Heart right ventricle (tissue), 16 donors: ENCODE measurements at regions of chr12 and their contacts with region 1.

Region 1: GRCh38 chr12:19186722-19187661 is 57.5 kb downstream of the PLEKHA5 start:
- DNase-seq: no peak
- ATAC-seq: peak in 6 of 8 donors; percentile 19 to 64 (median 44)
- H3K4me3 ChIP-seq: no peak overlapping the region
- H3K27ac ChIP-seq: peak overlapping the region in 9 of 10 donors; percentile 17 to 81 (median 41)
- H3K4me1 ChIP-seq: peaks cover 6 to 88% (median 57%) of the 10 kb centered on the region in 9 donors
- H3K27me3 ChIP-seq: no peaks in the 10 kb centered on the region
- CTCF ChIP-seq: peak; percentile 56 to 80 (median 72)

Region 2: GRCh38 chr12:18430425-18431048 is 756.5 kb before region 1 on chr12:
- intact Hi-C with region 1: loop called in 6 of 10 experiments (anchors 2 to 10 kb)
- DNase-seq: peak in 1 of 2 donors; percentile 37
- ATAC-seq: peak; percentile 73 to 94 (median 88)
- H3K4me3 ChIP-seq: no peak overlapping the region
- H3K27ac ChIP-seq: no peak overlapping the region
- H3K4me1 ChIP-seq: peaks cover 0 to 25% (median 0%) of the 10 kb centered on the region in 9 donors
- H3K27me3 ChIP-seq: no peaks in the 10 kb centered on the region
- CTCF ChIP-seq: peak; percentile 42 to 89 (median 80)

Region 3: GRCh38 chr12:18849761-18850160 is 337.2 kb before region 1 on chr12:
- intact Hi-C with region 1: loop called in 1 of 10 experiments (anchors 10 kb)
- DNase-seq: no peak
- ATAC-seq: no peak
- H3K4me3 ChIP-seq: no peak overlapping the region
- H3K27ac ChIP-seq: no peak overlapping the region
- H3K4me1 ChIP-seq: no peaks in the 10 kb centered on the region
- H3K27me3 ChIP-seq: no peaks in the 10 kb centered on the region
- CTCF ChIP-seq: no peak

Region 4: DNA sequence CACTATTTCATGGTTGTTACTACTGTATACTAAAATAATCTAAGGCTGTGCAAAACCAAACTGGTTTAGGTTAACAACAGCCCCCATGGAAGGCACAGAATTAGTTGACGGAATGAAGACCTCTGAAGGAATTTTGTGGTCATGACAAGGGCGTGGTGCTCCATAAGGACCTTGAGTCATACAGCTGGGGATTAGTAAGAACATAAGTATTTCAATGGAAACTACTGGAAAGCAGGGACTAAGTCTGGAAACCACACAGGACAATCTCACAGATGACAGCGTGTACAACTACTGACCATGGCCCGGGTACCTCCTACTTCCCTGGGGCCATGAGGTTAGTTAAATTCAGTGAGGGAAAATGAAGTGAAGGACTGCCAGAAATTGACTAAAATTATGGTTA is 156.0 kb before region 1 on chr12:
- intact Hi-C with region 1: loop called in 3 of 10 experiments (anchors 5 to 10 kb)
- DNase-seq: no peak
- ATAC-seq: peak in 5 of 8 donors; percentile 30 to 59 (median 50)
- H3K4me3 ChIP-seq: no peak overlapping the region
- H3K27ac ChIP-seq: no peak overlapping the region
- H3K4me1 ChIP-seq: peaks cover 0 to 14% (median 4%) of the 10 kb centered on the region in 9 donors
- H3K27me3 ChIP-seq: no peaks in the 10 kb centered on the region
- CTCF ChIP-seq: no peak

Region 5: DNA sequence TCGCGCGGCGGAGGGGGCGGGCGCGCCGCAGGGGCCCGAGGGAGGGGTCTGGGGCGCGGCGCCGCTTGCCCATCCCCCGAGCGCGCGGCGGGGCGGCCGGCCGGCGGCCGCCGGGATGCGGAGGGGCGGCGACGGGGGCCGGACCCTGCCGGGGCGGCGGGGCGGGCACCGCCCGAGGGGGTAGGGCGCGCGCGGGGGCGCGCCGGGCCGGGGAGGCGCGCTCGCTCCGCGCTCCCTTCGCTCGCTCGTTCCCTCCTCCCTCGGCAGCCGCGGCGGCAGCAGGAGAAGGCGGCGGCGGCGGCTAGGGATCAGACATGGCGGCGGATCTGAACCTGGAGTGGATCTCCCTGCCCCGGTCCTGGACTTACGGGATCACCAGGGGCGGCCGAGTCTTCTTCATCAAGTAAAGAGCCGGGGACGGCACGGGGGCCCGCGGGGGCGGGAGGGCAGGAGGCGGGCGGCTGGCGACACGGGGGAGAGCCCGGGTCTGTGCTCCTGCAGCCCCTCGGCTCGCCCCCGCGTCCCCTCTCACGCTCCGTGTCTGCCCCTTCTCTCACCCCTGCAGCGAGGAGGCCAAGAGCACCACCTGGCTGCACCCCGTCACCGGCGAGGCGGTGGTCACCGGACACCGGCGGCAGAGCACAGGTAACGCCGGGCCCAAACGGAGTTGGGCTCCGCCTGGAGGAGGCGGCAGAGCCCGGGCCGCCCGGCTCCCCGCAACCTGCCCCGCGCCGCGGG is 57.3 kb before region 1 on chr12 and contains the start of gene PLEKHA5:
- intact Hi-C with region 1: loop called in 4 of 10 experiments (anchors 2 to 5 kb)
- DNase-seq: peak; percentile 68 to 82
- ATAC-seq: peak; percentile 73 to 94 (median 90)
- H3K4me3 ChIP-seq: peak within 1 kb of the TSS; percentile 82 to 98 (median 93)
- H3K27ac ChIP-seq: peak within 1 kb of the TSS; percentile 86 to 97 (median 94)
- H3K4me1 ChIP-seq: peaks cover 0 to 21% (median 6%) of the 10 kb centered on the region in 9 donors
- H3K27me3 ChIP-seq: no peaks in the 10 kb centered on the region
- CTCF ChIP-seq: peak in 6 of 9 donors; percentile 13 to 52 (median 32)
- total RNA-seq, gene PLEKHA5: 38.8 to 77.1 (median 65.7) TPM

Region 6: DNA sequence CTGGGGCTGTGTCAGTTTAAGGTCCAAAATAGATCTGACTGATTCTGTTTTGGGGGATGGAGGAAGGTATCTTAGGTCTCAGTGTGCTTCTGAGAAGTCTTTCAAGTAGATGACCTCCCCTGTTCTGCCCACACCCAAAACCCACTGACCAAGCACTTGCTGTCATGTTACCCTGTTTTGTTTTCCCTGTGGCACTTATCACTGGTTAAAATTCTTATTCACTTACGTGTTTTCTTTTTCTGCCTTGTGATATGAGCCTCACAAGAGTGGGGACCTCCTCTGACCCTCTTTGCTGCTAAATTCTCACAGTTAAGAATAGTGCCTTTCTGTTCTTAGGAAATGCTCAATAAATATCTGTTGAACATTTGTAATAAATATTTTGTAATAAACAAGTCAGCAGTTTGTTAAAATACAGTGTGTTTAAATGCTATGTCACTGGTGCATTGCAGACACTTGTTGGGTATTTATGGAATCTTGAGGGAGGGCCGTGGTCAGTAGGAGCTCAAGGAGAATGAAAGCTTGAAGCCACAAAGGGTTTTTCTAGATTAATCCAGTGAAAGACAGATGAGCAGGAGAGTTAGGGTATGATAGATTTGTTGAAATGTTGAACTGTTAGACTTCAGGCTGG is 36.6 kb before region 1 on chr12:
- intact Hi-C with region 1: no loop called
- DNase-seq: peak in 1 of 2 donors; percentile 29
- ATAC-seq: peak; percentile 67 to 95 (median 90)
- H3K4me3 ChIP-seq: no peak overlapping the region
- H3K27ac ChIP-seq: peak overlapping the region; percentile 36 to 87 (median 76)
- H3K4me1 ChIP-seq: peaks cover 0 to 55% (median 22%) of the 10 kb centered on the region in 9 donors
- H3K27me3 ChIP-seq: no peaks in the 10 kb centered on the region
- CTCF ChIP-seq: no peak

Region 7: GRCh38 chr12:19288603-19289244 is 101.7 kb after region 1 on chr12:
- intact Hi-C with region 1: loop called in 5 of 10 experiments (anchors 5 to 10 kb)
- DNase-seq: no peak
- ATAC-seq: peak in 4 of 8 donors; percentile 34 to 54 (median 45)
- H3K4me3 ChIP-seq: no peak overlapping the region
- H3K27ac ChIP-seq: no peak overlapping the region
- H3K4me1 ChIP-seq: peaks cover 0 to 8% (median 0%) of the 10 kb centered on the region in 9 donors
- H3K27me3 ChIP-seq: no peaks in the 10 kb centered on the region
- CTCF ChIP-seq: peak; percentile 23 to 85 (median 70)